Activated CD8-positive, alpha-beta T cell treated with anti-CD3 and anti-CD28 coated beads for 36 hours (primary cell): ENCODE measurements at regions of chr3 and their contacts with region 1.

Region 1: DNA sequence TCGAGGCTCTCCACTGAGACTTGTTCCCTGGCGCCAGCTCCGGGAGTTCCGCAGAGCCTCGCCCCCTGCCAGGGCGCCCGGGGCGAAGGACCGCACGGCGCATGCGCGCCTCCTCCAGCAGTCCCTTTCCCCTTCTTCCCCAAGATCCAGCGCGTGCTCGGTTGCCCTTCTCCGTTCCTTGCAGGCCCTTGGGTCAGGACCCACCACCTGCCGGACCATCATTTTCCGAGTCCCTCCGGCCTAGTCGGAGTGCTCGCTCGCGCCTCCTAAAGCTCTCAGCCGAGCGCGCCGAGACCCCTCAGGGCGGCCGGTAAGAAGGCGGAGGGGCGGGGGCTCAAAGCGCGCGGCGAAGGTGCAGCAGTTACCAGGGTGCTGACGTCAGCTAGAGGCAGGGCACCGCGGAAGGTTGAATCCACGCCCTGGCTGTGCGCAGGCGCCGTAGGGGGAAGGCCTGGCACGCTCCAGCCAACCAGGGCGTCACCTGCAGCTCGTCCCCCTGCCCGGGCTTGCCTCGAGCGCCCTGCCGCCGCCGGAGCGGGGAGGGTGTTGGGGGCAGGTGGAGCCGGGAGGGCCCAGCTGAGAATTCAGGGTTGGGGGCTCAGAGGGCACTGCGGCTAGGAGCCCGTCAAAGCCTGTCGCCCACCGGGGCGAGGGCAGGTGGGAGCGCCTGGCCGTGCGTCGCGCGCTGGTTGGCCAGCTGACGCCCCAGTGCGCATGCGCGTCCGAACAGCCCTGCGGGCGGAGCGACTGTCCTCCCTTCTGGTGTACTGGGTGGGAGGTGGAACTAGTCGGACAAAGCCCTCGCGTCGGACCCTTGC is at the start of gene TCAIM:
- DNase-seq: peak; percentile 99
- ATAC-seq: peak; percentile 97
- H3K4me3 Mint-ChIP-seq: peak within 1 kb of the TSS; percentile 99
- H3K27ac Mint-ChIP-seq: peak within 1 kb of the TSS; percentile 98
- H3K4me1 Mint-ChIP-seq: peaks cover 18% of the 10 kb centered on the region
- H3K27me3 Mint-ChIP-seq: peaks cover 5% of the 10 kb centered on the region
- CTCF ChIP-seq: no peak
- total RNA-seq, gene TCAIM: 14.3 to 15.1 TPM

Region 2: DNA sequence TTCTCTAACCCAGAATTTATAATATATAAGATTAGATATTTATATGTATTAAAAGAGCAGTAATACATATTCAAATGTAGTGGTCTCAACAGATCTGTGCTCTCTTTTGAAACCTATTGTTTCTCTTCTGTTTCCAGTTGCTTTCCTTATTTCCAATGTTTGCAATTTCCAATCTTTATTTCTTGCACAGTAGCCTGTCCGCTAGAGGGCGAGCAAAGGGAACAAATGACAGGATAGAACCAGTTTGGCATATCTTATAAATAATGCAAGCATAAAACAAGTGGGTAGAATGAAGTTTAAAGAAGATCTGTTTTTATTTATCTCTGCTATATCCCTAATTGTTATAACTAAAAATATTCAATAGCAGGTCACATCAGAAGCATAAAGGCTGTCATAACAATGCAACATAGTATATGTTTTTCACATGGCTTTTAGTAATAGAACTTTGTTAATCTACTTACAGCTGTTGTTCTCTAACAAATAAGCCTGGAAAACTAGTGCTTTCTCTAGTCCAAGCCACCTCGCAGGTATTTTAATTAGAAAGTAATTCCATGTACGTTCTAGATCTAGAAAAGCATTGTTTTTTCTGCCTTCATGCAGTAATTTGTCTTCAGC is 14.8 kb before region 1 on chr3:
- CTCF ChIA-PET with region 1: interaction called, 11 read pairs
- POLR2A ChIA-PET with region 1: no interaction called
- intact Hi-C with region 1: no loop called
- DNase-seq: peak; percentile 77
- ATAC-seq: no peak
- H3K4me3 Mint-ChIP-seq: no peak overlapping the region
- H3K27ac Mint-ChIP-seq: no peak overlapping the region
- H3K4me1 Mint-ChIP-seq: no peaks in the 10 kb centered on the region
- H3K27me3 Mint-ChIP-seq: peaks cover 4% of the 10 kb centered on the region
- CTCF ChIP-seq: peak; percentile 82

Region 3: GRCh38 chr3:44427683-44428082 is 89.5 kb after region 1 on chr3:
- CTCF ChIA-PET with region 1: no interaction called
- POLR2A ChIA-PET with region 1: no interaction called
- intact Hi-C with region 1: no loop called
- DNase-seq: no peak
- ATAC-seq: no peak
- H3K4me3 Mint-ChIP-seq: no peak overlapping the region
- H3K27ac Mint-ChIP-seq: no peak overlapping the region
- H3K4me1 Mint-ChIP-seq: no peaks in the 10 kb centered on the region
- H3K27me3 Mint-ChIP-seq: no peaks in the 10 kb centered on the region
- CTCF ChIP-seq: no peak

Region 4: DNA sequence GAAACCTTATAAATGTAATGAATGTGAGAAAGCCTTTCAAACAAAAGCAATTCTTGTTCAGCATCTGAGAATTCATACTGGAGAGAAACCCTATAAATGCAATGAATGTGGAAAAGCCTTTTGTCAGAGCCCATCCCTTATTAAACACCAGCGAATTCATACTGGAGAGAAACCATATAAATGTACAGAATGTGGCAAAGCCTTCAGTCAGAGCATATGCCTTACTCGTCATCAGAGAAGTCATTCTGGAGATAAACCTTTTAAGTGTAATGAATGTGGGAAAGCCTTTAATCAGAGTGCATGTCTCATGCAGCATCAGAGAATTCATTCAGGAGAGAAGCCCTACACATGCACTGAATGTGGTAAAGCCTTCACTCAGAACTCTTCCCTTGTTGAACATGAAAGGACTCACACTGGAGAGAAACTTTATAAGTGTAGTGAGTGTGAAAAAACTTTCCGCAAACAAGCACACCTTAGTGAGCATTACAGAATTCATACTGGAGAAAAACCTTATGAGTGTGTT is 396.5 kb after region 1 on chr3:
- CTCF ChIA-PET with region 1: no interaction called
- POLR2A ChIA-PET with region 1: no interaction called
- intact Hi-C with region 1: no loop called
- DNase-seq: no peak
- ATAC-seq: no peak
- H3K4me3 Mint-ChIP-seq: no peak overlapping the region
- H3K27ac Mint-ChIP-seq: no peak overlapping the region
- H3K4me1 Mint-ChIP-seq: peaks cover 9% of the 10 kb centered on the region
- H3K27me3 Mint-ChIP-seq: no peaks in the 10 kb centered on the region
- CTCF ChIP-seq: no peak